Heart left ventricle (tissue), 16 donors: ENCODE measurements at regions of chr3 and their contacts with region 1.

Region 1: DNA sequence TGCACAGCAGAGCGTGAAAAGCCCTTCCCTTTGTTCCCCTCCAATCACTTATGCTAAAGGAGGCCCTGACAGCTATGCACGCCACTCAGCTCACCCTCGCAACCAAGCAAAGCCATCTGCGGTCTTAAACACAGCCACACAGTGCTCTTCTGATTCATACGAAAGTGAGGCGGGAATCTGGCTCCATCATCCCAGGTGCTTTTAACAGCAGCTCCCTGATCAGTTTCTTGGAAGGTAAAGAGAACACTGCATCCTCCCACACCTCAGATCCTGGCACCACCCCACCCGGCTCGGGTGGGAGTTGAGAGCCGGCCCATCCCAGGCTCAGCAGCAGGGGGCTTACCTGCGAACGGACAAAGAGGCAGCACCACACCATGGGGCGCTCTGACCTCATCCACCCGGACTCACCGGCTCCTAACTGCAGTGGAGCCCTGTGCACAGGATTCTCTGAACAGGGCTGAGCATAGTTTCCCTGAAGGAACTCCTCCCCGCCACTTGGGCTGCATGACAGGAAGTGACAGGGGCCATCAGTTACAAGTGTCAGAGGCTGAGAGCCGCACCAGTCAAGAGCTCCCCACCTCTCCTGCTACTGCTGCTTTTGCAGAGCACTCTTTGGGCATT is 114.3 kb upstream of the ARHGEF3 start:
- DNase-seq: peak in 4 of 5 donors; percentile 36 to 62 (median 52)
- ATAC-seq: peak; percentile 74 to 86 (median 82)
- H3K4me3 ChIP-seq: peak overlapping the region in 11 of 12 donors; percentile 14 to 59 (median 46)
- H3K27ac ChIP-seq: peak overlapping the region; percentile 38 to 78 (median 66)
- H3K4me1 ChIP-seq: peaks cover 0 to 40% (median 13%) of the 10 kb centered on the region in 12 donors
- H3K27me3 ChIP-seq: no peaks in the 10 kb centered on the region
- CTCF ChIP-seq: peak in 1 of 12 donors; percentile 6
- POLR2A ChIP-seq: no peak

Region 2: DNA sequence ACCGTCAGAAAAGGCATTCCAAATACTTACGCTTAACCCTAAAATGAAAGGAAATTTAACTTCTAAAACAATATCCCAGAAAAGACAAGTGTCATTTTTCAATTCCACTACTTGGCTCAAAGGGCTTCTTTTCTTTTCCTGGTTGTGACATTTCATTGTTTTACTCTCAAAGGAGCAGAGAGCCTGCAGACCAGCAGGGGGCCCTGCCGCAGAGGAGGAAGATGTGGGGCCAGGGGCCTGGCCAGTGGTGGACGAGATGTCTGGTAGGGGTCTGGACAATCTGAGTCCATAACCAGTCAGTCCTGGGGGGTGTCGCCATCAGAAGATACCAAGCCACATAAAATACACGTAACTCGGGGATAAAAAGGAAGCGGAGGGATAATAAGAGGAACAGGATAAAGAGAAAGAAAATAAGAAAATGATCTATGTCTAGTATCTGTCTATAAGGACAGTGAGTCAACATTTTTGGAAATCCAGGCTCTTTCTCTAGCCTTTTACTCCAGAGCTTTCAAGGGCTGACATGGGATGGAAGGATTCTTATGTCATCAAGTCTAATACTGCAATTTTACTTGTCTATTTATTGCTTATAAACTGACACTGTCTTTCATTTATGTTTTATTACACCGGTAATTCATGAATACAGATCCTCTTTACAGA is 60.1 kb before region 1 on chr3:
- intact Hi-C with region 1: loop called in 1 of 10 experiments (anchors 5 kb)
- DNase-seq: peak in 2 of 5 donors; percentile 15 to 30
- ATAC-seq: peak in 2 of 4 donors; percentile 49 to 50
- H3K4me3 ChIP-seq: no peak overlapping the region
- H3K27ac ChIP-seq: no peak overlapping the region
- H3K4me1 ChIP-seq: peaks cover 0 to 10% (median 0%) of the 10 kb centered on the region in 12 donors
- H3K27me3 ChIP-seq: no peaks in the 10 kb centered on the region
- CTCF ChIP-seq: peak; percentile 28 to 68 (median 52)
- POLR2A ChIP-seq: no peak

Region 3: GRCh38 chr3:56976651-56977560 is 60.8 kb after region 1 on chr3:
- intact Hi-C with region 1: no loop called
- DNase-seq: no peak
- ATAC-seq: no peak
- H3K4me3 ChIP-seq: no peak overlapping the region
- H3K27ac ChIP-seq: no peak overlapping the region
- H3K4me1 ChIP-seq: peaks cover 0 to 19% (median 4%) of the 10 kb centered on the region in 12 donors
- H3K27me3 ChIP-seq: no peaks in the 10 kb centered on the region
- CTCF ChIP-seq: no peak
- POLR2A ChIP-seq: no peak